GM12878 (cell line): ENCODE measurements at regions of chr5 and their contacts with region 1.

Region 1: DNA sequence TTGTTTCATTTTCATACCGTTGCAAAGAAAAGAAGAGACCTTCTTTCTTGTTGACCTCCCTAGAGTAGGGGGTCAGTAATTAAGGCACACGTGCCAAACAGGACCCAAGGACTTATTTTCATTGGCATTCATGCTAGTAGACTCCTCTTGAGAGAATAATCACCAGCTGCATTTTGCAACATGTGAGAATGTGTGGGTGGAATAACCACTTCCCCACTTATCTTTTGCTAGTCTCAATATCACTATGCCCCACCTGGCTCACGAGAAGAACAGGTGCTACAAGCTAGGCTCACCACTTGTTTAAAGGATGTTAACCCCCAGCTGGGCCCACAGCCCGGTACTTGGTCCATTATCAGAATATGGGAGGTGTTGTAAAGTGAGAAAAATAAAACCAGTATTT is 460.7 kb upstream of the MEF2C start:
- DNase-seq: peak; percentile 97
- ATAC-seq: peak; percentile 86
- H3K4me3 ChIP-seq: no peak overlapping the region
- H3K27ac ChIP-seq: peak overlapping the region; percentile 93
- H3K4me1 ChIP-seq: peaks cover 37% of the 10 kb centered on the region; the same call in 1 of the 2 replicates
- H3K27me3 ChIP-seq: no peaks in the 10 kb centered on the region
- CTCF ChIP-seq: no peak
- EP300 ChIP-seq: peak; percentile 100
- POLR2A ChIP-seq: no peak
- RAD21 ChIP-seq: peak; percentile 17

Region 2: DNA sequence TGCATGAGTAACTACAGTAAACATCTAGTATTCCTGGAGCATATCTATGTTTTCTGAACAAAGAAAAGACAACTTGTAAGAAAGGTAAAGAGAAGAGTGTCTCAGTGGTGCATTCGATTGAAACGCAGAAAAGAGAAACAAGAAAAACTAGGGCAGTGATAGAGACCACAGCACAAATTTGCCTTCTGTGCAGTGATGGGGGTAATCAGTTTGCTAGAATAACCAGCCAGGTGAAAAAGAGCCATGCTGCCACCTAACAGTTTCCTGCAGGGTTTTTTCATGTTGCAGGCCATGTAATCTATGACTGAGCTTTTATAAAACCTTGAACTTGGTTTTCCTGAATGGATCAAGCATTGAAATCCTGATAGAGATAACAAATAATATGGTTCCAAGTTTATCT is 262.3 kb before region 1 on chr5:
- CTCF ChIA-PET with region 1: interaction called, 3 read pairs
- POLR2A ChIA-PET with region 1: no interaction called
- RAD21 ChIA-PET with region 1: interaction called, 3 read pairs
- SMC1A ChIA-PET with region 1: interaction called, 10 read pairs
- in situ Hi-C with region 1: no loop called
- intact Hi-C with region 1: no loop called
- DNase-seq: peak; percentile 62
- ATAC-seq: peak; percentile 89
- H3K4me3 ChIP-seq: peak overlapping the region; percentile 3; the same call in 1 of the 2 replicates
- H3K27ac ChIP-seq: peak overlapping the region; percentile 55
- H3K4me1 ChIP-seq: peaks cover 11% of the 10 kb centered on the region
- H3K27me3 ChIP-seq: no peaks in the 10 kb centered on the region
- CTCF ChIP-seq: peak in 1 of 3 experiments; percentile 36; a peak in 2 of 6 replicates
- EP300 ChIP-seq: 0 out of 4 replicates have a peak, but pooled peaks of 1 of the 2 experiments have one; percentile 21
- POLR2A ChIP-seq: no peak
- RAD21 ChIP-seq: peak; percentile 54

Region 3: GRCh38 chr5:89232139-89232603 is 111.5 kb before region 1 on chr5:
- CTCF ChIA-PET with region 1: interaction called, 4 read pairs
- POLR2A ChIA-PET with region 1: no interaction called
- RAD21 ChIA-PET with region 1: interaction called, 38 read pairs
- SMC1A ChIA-PET with region 1: interaction called, 37 read pairs
- in situ Hi-C with region 1: loop called (anchors 5 kb)
- intact Hi-C with region 1: loop called (anchors 1 kb)
- DNase-seq: peak; percentile 96
- ATAC-seq: peak; percentile 90
- H3K4me3 ChIP-seq: 0 out of 2 replicates have a peak overlapping the region, but pooled peaks have one; percentile 25
- H3K27ac ChIP-seq: peak overlapping the region; percentile 97
- H3K4me1 ChIP-seq: peaks cover 43% of the 10 kb centered on the region
- H3K27me3 ChIP-seq: no peaks in the 10 kb centered on the region
- CTCF ChIP-seq: no peak
- EP300 ChIP-seq: peak; percentile 96 to 98
- POLR2A ChIP-seq: no peak
- RAD21 ChIP-seq: no peak

Region 4: GRCh38 chr5:89308606-89309040 is 35.0 kb before region 1 on chr5:
- CTCF ChIA-PET with region 1: interaction called, 19 read pairs
- POLR2A ChIA-PET with region 1: interaction called, 15 read pairs
- RAD21 ChIA-PET with region 1: interaction called, 101 read pairs
- SMC1A ChIA-PET with region 1: interaction called, 108 read pairs
- in situ Hi-C with region 1: no loop called
- intact Hi-C with region 1: loop called (anchors 5 kb)
- DNase-seq: peak; percentile 92
- ATAC-seq: peak; percentile 89
- H3K4me3 ChIP-seq: no peak overlapping the region
- H3K27ac ChIP-seq: peak overlapping the region; percentile 96
- H3K4me1 ChIP-seq: peaks cover 44% of the 10 kb centered on the region
- H3K27me3 ChIP-seq: no peaks in the 10 kb centered on the region
- CTCF ChIP-seq: no peak
- EP300 ChIP-seq: peak; percentile 85 to 95
- POLR2A ChIP-seq: peak; percentile 43; the same call in 1 of the 2 replicates
- RAD21 ChIP-seq: peak; percentile 33; the same call in 1 of the 2 replicates

Region 5: GRCh38 chr5:89324990-89325389 is 18.7 kb before region 1 on chr5:
- CTCF ChIA-PET with region 1: interaction called, 4 read pairs
- POLR2A ChIA-PET with region 1: no interaction called
- RAD21 ChIA-PET with region 1: interaction called, 19 read pairs
- SMC1A ChIA-PET with region 1: interaction called, 48 read pairs
- in situ Hi-C with region 1: no loop called
- intact Hi-C with region 1: no loop called
- DNase-seq: no peak
- ATAC-seq: no peak
- H3K4me3 ChIP-seq: no peak overlapping the region
- H3K27ac ChIP-seq: no peak overlapping the region
- H3K4me1 ChIP-seq: peaks cover 6% of the 10 kb centered on the region
- H3K27me3 ChIP-seq: no peaks in the 10 kb centered on the region
- CTCF ChIP-seq: no peak
- EP300 ChIP-seq: no peak
- POLR2A ChIP-seq: no peak
- RAD21 ChIP-seq: no peak

Region 6: DNA sequence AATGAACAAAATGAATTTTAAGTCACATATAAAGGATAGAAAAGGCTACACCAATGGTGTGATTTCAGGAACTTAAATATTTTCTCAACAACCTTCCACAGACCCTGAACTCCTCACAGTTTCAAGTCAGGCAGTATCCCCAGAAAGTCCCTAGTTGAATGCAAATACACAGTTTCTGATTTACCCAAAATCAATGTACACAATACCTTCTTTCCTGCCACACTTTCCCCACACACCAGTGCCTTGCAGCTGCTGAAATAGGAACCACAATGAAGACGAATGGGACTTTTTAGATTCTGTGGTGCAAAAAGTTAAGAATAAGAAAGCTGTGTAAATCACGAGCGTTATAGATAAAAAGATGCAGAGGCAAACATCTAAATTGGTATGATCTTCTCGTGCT is 91.7 kb after region 1 on chr5:
- CTCF ChIA-PET with region 1: interaction called, 13 read pairs
- POLR2A ChIA-PET with region 1: no interaction called
- RAD21 ChIA-PET with region 1: interaction called, 56 read pairs
- SMC1A ChIA-PET with region 1: interaction called, 71 read pairs
- in situ Hi-C with region 1: no loop called
- intact Hi-C with region 1: loop called (anchors 2 kb)
- DNase-seq: peak; percentile 90
- ATAC-seq: peak; percentile 88
- H3K4me3 ChIP-seq: 0 out of 2 replicates have a peak overlapping the region, but pooled peaks have one; percentile 41
- H3K27ac ChIP-seq: peak overlapping the region; percentile 92
- H3K4me1 ChIP-seq: peaks cover 29% of the 10 kb centered on the region; the same call in 1 of the 2 replicates
- H3K27me3 ChIP-seq: no peaks in the 10 kb centered on the region
- CTCF ChIP-seq: 0 out of 6 replicates have a peak, but pooled peaks of 1 of the 3 experiments have one; percentile 3
- EP300 ChIP-seq: peak; percentile 50 to 87; a peak in 2 of 4 replicates
- POLR2A ChIP-seq: 0 out of 2 replicates have a peak, but pooled peaks have one; percentile 28
- RAD21 ChIP-seq: peak; percentile 53

Region 7: GRCh38 chr5:90264689-90265544 is 921.3 kb after region 1 on chr5:
- CTCF ChIA-PET with region 1: interaction called, 3 read pairs
- POLR2A ChIA-PET with region 1: no interaction called
- RAD21 ChIA-PET with region 1: no interaction called
- SMC1A ChIA-PET with region 1: no interaction called
- in situ Hi-C with region 1: no loop called
- intact Hi-C with region 1: loop called (anchors 10 kb)
- DNase-seq: peak; percentile 41
- ATAC-seq: peak; percentile 88
- H3K4me3 ChIP-seq: peak overlapping the region; percentile 26; the same call in 1 of the 2 replicates
- H3K27ac ChIP-seq: no peak overlapping the region
- H3K4me1 ChIP-seq: peaks cover 5% of the 10 kb centered on the region
- H3K27me3 ChIP-seq: no peaks in the 10 kb centered on the region
- CTCF ChIP-seq: peak; percentile 89 to 96 (median 92)
- EP300 ChIP-seq: no peak
- POLR2A ChIP-seq: no peak
- RAD21 ChIP-seq: peak; percentile 99